CD4-positive, alpha-beta memory T cell (primary cell): ENCODE measurements at regions of chr9 and their contacts with region 1.

Region 1: GRCh38 chr9:100322954-100323536 is 29.7 kb downstream of the TEX10 start:
- DNase-seq: peak in 4 of 5 donors; percentile 8 to 26 (median 11)
- H3K4me3 ChIP-seq: no peak overlapping the region
- H3K4me3 Mint-ChIP-seq: no peak overlapping the region
- H3K27ac ChIP-seq: no peak overlapping the region
- H3K27ac Mint-ChIP-seq: peak overlapping the region in 3 of 7 donors; percentile 18 to 31 (median 19)
- H3K4me1 ChIP-seq: peaks cover 3% of the 10 kb centered on the region
- H3K4me1 Mint-ChIP-seq: peaks cover 12 to 13% (median 13%) of the 10 kb centered on the region in 4 donors
- H3K27me3 ChIP-seq: no peaks in the 10 kb centered on the region
- H3K27me3 Mint-ChIP-seq: no peaks in the 10 kb centered on the region

Region 2: GRCh38 chr9:99266255-99267023 is 1056.6 kb before region 1 on chr9:
- CTCF ChIA-PET with region 1: no interaction called
- POLR2A ChIA-PET with region 1: no interaction called
- intact Hi-C with region 1: loop called (anchors 5 kb)
- DNase-seq: peak; percentile 22 to 52 (median 29)
- H3K4me3 ChIP-seq: no peak overlapping the region
- H3K4me3 Mint-ChIP-seq: peak overlapping the region in 5 of 8 donors; percentile 23 to 64 (median 36)
- H3K27ac ChIP-seq: no peak overlapping the region
- H3K27ac Mint-ChIP-seq: no peak overlapping the region
- H3K4me1 ChIP-seq: peaks cover 8% of the 10 kb centered on the region
- H3K4me1 Mint-ChIP-seq: peaks cover 7 to 12% (median 9%) of the 10 kb centered on the region in 4 donors
- H3K27me3 ChIP-seq: no peaks in the 10 kb centered on the region
- H3K27me3 Mint-ChIP-seq: peaks cover 0 to 2% of the 10 kb centered on the region in 2 donors

Region 3: DNA sequence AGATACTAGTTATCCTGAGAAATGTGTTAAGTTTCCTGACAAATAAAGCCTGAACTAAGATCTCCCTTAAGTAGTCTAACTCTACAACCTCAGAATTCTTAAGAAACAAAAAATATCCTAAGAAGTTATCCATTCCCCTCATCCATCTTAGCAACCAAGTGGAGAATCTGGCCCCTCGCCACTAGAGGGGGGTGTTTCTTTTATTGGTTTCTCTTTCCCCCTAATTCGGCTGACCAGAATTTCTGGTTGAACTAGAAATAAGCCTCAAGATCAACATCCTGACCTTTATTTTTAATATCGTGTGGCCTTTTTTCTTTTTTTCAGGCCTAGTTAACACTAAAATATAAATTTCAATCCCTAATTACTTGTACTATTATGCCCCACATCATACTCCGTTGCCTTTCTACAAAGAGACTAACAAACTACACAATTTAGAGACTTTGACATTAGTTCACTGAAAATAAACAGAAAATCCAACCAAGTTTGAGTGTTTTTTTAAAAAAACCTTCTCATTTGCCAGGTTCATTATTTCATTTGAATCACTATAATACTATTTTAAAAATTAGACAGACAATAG is 515.7 kb before region 1 on chr9:
- CTCF ChIA-PET with region 1: interaction called, 3 read pairs
- POLR2A ChIA-PET with region 1: no interaction called
- intact Hi-C with region 1: loop called (anchors 1 kb)
- DNase-seq: peak; percentile 67 to 78 (median 72)
- H3K4me3 ChIP-seq: no peak overlapping the region
- H3K4me3 Mint-ChIP-seq: no peak overlapping the region
- H3K27ac ChIP-seq: no peak overlapping the region
- H3K27ac Mint-ChIP-seq: peak overlapping the region in 6 of 7 donors; percentile 14 to 67 (median 38)
- H3K4me1 ChIP-seq: no peaks in the 10 kb centered on the region
- H3K4me1 Mint-ChIP-seq: peaks cover 0 to 6% (median 5%) of the 10 kb centered on the region in 4 donors
- H3K27me3 ChIP-seq: no peaks in the 10 kb centered on the region
- H3K27me3 Mint-ChIP-seq: peaks cover 5 to 8% of the 10 kb centered on the region in 2 donors

Region 4: GRCh38 chr9:100028201-100028784 is 294.8 kb before region 1 on chr9:
- CTCF ChIA-PET with region 1: interaction called, 3 read pairs
- POLR2A ChIA-PET with region 1: no interaction called
- intact Hi-C with region 1: loop called (anchors 1 kb)
- DNase-seq: peak; percentile 47 to 67 (median 58)
- H3K4me3 ChIP-seq: no peak overlapping the region
- H3K4me3 Mint-ChIP-seq: no peak overlapping the region
- H3K27ac ChIP-seq: no peak overlapping the region
- H3K27ac Mint-ChIP-seq: peak overlapping the region in 1 of 7 donors; percentile 57
- H3K4me1 ChIP-seq: no peaks in the 10 kb centered on the region
- H3K4me1 Mint-ChIP-seq: peaks cover 5 to 11% (median 7%) of the 10 kb centered on the region in 4 donors
- H3K27me3 ChIP-seq: no peaks in the 10 kb centered on the region
- H3K27me3 Mint-ChIP-seq: no peaks in the 10 kb centered on the region

Region 5: DNA sequence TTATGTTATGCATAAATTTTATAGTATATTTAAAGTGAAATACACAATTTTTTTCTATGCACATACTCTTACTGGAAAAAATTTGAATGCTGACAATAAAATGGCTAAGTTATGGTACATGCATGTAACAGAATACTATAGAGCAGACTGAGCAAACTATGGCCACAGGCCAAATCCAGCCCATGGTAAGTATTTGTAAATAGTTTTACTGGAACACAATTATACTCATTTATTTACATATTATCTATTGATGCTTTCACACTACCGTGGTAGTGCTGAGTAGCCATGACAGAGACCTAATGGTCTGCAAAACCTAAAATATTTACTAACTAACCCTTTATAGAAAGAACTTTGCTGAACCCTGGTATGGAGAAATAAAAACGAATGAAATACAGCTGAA is 16.0 kb before region 1 on chr9:
- CTCF ChIA-PET with region 1: no interaction called
- POLR2A ChIA-PET with region 1: no interaction called
- intact Hi-C with region 1: no loop called
- DNase-seq: no peak
- H3K4me3 ChIP-seq: no peak overlapping the region
- H3K4me3 Mint-ChIP-seq: no peak overlapping the region
- H3K27ac ChIP-seq: no peak overlapping the region
- H3K27ac Mint-ChIP-seq: peak overlapping the region in 1 of 7 donors; percentile 10
- H3K4me1 ChIP-seq: no peaks in the 10 kb centered on the region
- H3K4me1 Mint-ChIP-seq: peaks cover 0 to 13% (median 7%) of the 10 kb centered on the region in 4 donors
- H3K27me3 ChIP-seq: no peaks in the 10 kb centered on the region
- H3K27me3 Mint-ChIP-seq: no peaks in the 10 kb centered on the region

Region 6: GRCh38 chr9:100341889-100342288 is 18.8 kb after region 1 on chr9:
- CTCF ChIA-PET with region 1: interaction called, 46 read pairs
- POLR2A ChIA-PET with region 1: no interaction called
- intact Hi-C with region 1: no loop called
- DNase-seq: no peak
- H3K4me3 ChIP-seq: no peak overlapping the region
- H3K4me3 Mint-ChIP-seq: no peak overlapping the region
- H3K27ac ChIP-seq: no peak overlapping the region
- H3K27ac Mint-ChIP-seq: no peak overlapping the region
- H3K4me1 ChIP-seq: no peaks in the 10 kb centered on the region
- H3K4me1 Mint-ChIP-seq: peaks cover 20 to 34% (median 23%) of the 10 kb centered on the region in 4 donors
- H3K27me3 ChIP-seq: no peaks in the 10 kb centered on the region
- H3K27me3 Mint-ChIP-seq: no peaks in the 10 kb centered on the region